ENCODE measurements at regions of chr7 and their contacts with region 1.

Region 1: GRCh38 chr7:100611974-100612729 is at the start of gene MOSPD3:
- DNase-seq: peak; percentile 99
- H3K4me3 ChIP-seq: peak within 1 kb of the TSS; percentile 90
- H3K27ac ChIP-seq: peak within 1 kb of the TSS; percentile 82
- H3K27me3 ChIP-seq: no peaks in the 10 kb centered on the region
- CTCF ChIP-seq: no peak
- polyA plus RNA-seq, gene MOSPD3: 9.1 and 10.0 TPM in 2 replicates

Region 2: GRCh38 chr7:100407285-100408180 is 204.6 kb before region 1 on chr7:
- CTCF ChIA-PET with region 1: no interaction called
- POLR2A ChIA-PET with region 1: no interaction called
- DNase-seq: peak; percentile 41
- H3K4me3 ChIP-seq: no peak overlapping the region
- H3K27ac ChIP-seq: no peak overlapping the region
- H3K27me3 ChIP-seq: peaks cover 29% of the 10 kb centered on the region
- CTCF ChIP-seq: peak; percentile 83

Region 3: GRCh38 chr7:100642534-100642907 is 30.4 kb after region 1 on chr7:
- CTCF ChIA-PET with region 1: no interaction called
- POLR2A ChIA-PET with region 1: interaction called, 10 read pairs
- DNase-seq: no peak
- H3K4me3 ChIP-seq: no peak overlapping the region
- H3K27ac ChIP-seq: no peak overlapping the region
- H3K27me3 ChIP-seq: peaks cover 16% of the 10 kb centered on the region
- CTCF ChIP-seq: no peak